B cell (primary cell): ENCODE measurements at regions of chr19 and their contacts with region 1.

Region 1: GRCh38 chr19:10580979-10581631 is 6.0 kb downstream of the AP1M2 start:
- DNase-seq: peak; percentile 93
- ATAC-seq: peak; percentile 99
- H3K4me3 ChIP-seq: peak overlapping the region in 1 of 5 experiments; percentile 2
- H3K4me3 Mint-ChIP-seq: peak overlapping the region; percentile 30
- H3K27ac ChIP-seq: no peak overlapping the region
- H3K27ac Mint-ChIP-seq: peak overlapping the region; percentile 16
- H3K4me1 ChIP-seq: peaks cover 4 to 8% of the 10 kb centered on the region in 2 donors
- H3K4me1 Mint-ChIP-seq: peaks cover 16% of the 10 kb centered on the region
- H3K27me3 ChIP-seq: no peaks in the 10 kb centered on the region
- H3K27me3 Mint-ChIP-seq: no peaks in the 10 kb centered on the region
- CTCF ChIP-seq: peak; percentile 98

Region 2: GRCh38 chr19:10533646-10534386 is 47.3 kb before region 1 on chr19:
- CTCF ChIA-PET with region 1: interaction called, 6 read pairs
- POLR2A ChIA-PET with region 1: interaction called, 10 read pairs
- intact Hi-C with region 1: no loop called
- DNase-seq: no peak
- ATAC-seq: no peak
- H3K4me3 ChIP-seq: no peak overlapping the region
- H3K4me3 Mint-ChIP-seq: no peak overlapping the region
- H3K27ac ChIP-seq: no peak overlapping the region
- H3K27ac Mint-ChIP-seq: no peak overlapping the region
- H3K4me1 ChIP-seq: no peaks in the 10 kb centered on the region
- H3K4me1 Mint-ChIP-seq: peaks cover under 1% of the 10 kb centered on the region
- H3K27me3 ChIP-seq: peaks cover 0 to 12% (median 1%) of the 10 kb centered on the region in 4 experiments
- H3K27me3 Mint-ChIP-seq: peaks cover 16% of the 10 kb centered on the region
- CTCF ChIP-seq: no peak

Region 3: DNA sequence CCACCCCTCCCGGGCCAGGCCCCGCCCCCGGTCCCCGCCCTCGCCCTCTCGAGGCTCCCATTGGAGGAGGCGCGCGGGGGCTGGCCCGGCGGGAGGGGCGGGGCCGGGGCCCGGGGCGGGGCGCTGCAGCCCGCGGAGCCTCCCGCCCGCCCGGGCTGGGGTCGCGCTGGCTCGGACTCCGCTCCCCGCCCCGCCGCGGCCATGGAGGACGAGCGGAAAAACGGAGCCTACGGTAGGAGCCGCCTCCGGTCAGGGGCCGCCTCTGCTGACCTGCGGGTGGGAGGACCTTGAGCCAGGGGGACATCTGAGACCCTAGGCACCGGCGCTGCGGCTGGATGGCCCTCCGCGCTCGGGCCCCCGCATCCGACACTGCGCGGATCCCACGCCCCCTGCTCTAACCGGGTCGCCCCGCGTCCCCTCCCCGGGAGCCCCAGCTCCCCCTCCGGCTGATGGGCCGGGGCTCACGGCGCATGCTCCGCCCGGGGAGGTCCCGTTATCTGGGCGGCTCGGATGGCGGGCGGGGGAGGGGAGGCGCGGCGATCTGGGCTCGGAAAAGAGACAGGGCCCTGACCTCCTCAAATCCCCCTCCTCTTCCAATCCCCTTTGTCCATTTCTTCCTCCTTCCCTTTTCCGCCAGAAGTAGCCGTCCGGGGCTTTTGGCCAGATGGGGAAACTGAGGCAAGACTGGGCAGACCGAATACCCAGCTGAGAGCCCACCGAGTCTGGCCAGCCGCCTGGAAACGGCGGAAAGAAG is 21.4 kb after region 1 on chr19:
- CTCF ChIA-PET with region 1: interaction called, 58 read pairs
- POLR2A ChIA-PET with region 1: interaction called, 8 read pairs
- intact Hi-C with region 1: loop called (anchors 1 kb)
- DNase-seq: peak; percentile 86
- ATAC-seq: peak; percentile 73
- H3K4me3 ChIP-seq: peak overlapping the region; percentile 89 to 100 (median 94)
- H3K4me3 Mint-ChIP-seq: peak overlapping the region; percentile 96
- H3K27ac ChIP-seq: peak overlapping the region; percentile 97 to 99
- H3K27ac Mint-ChIP-seq: peak overlapping the region; percentile 99
- H3K4me1 ChIP-seq: peaks cover 30 to 47% of the 10 kb centered on the region in 2 donors
- H3K4me1 Mint-ChIP-seq: peaks cover 37% of the 10 kb centered on the region
- H3K27me3 ChIP-seq: no peaks in the 10 kb centered on the region
- H3K27me3 Mint-ChIP-seq: no peaks in the 10 kb centered on the region
- CTCF ChIP-seq: no peak

Region 4: GRCh38 chr19:10620786-10621185 is 39.7 kb after region 1 on chr19:
- CTCF ChIA-PET with region 1: interaction called, 30 read pairs
- POLR2A ChIA-PET with region 1: interaction called, 11 read pairs
- intact Hi-C with region 1: loop called (anchors 5 kb)
- DNase-seq: no peak
- ATAC-seq: no peak
- H3K4me3 ChIP-seq: no peak overlapping the region
- H3K4me3 Mint-ChIP-seq: no peak overlapping the region
- H3K27ac ChIP-seq: no peak overlapping the region
- H3K27ac Mint-ChIP-seq: peak overlapping the region; percentile 41
- H3K4me1 ChIP-seq: peaks cover 10 to 56% of the 10 kb centered on the region in 2 donors
- H3K4me1 Mint-ChIP-seq: peaks cover 52% of the 10 kb centered on the region
- H3K27me3 ChIP-seq: no peaks in the 10 kb centered on the region
- H3K27me3 Mint-ChIP-seq: no peaks in the 10 kb centered on the region
- CTCF ChIP-seq: no peak

Region 5: GRCh38 chr19:10644260-10645007 is 63.3 kb after region 1 on chr19:
- CTCF ChIA-PET with region 1: interaction called, 464 read pairs
- POLR2A ChIA-PET with region 1: interaction called, 29 read pairs
- intact Hi-C with region 1: loop called (anchors 1 kb)
- DNase-seq: peak; percentile 87
- ATAC-seq: peak; percentile 79
- H3K4me3 ChIP-seq: no peak overlapping the region
- H3K4me3 Mint-ChIP-seq: no peak overlapping the region
- H3K27ac ChIP-seq: peak overlapping the region; percentile 30 to 69
- H3K27ac Mint-ChIP-seq: peak overlapping the region; percentile 86
- H3K4me1 ChIP-seq: peaks cover 7 to 16% of the 10 kb centered on the region in 2 donors
- H3K4me1 Mint-ChIP-seq: peaks cover 26% of the 10 kb centered on the region
- H3K27me3 ChIP-seq: no peaks in the 10 kb centered on the region
- H3K27me3 Mint-ChIP-seq: no peaks in the 10 kb centered on the region
- CTCF ChIP-seq: peak; percentile 90

Region 6: DNA sequence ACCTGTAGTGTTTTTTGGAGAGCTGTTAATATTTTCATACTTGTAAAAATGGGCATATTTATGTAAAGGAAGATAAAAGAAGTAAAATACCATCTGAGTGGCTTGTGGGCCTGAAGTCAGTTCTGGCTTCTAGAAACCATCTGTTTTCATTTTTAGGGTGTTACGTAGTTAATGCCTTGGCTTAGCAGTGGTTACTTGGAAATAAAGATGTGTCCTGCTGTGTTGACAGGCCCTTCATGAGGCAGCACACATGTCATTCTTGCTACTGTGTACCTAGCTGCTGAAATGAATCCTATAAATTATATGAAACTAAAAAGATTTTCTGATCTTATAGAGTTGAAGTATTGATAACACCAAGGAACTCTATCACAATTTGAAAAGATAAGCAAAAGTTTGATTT is 89.1 kb after region 1 on chr19:
- CTCF ChIA-PET with region 1: interaction called, 13 read pairs
- POLR2A ChIA-PET with region 1: no interaction called
- intact Hi-C with region 1: no loop called
- DNase-seq: no peak
- ATAC-seq: no peak
- H3K4me3 ChIP-seq: no peak overlapping the region
- H3K4me3 Mint-ChIP-seq: no peak overlapping the region
- H3K27ac ChIP-seq: no peak overlapping the region
- H3K27ac Mint-ChIP-seq: no peak overlapping the region
- H3K4me1 ChIP-seq: peaks cover 9 to 26% of the 10 kb centered on the region in 2 donors
- H3K4me1 Mint-ChIP-seq: peaks cover 36% of the 10 kb centered on the region
- H3K27me3 ChIP-seq: no peaks in the 10 kb centered on the region
- H3K27me3 Mint-ChIP-seq: no peaks in the 10 kb centered on the region
- CTCF ChIP-seq: no peak